ENCODE measurements at regions of chr18 and their contacts with region 1.

Region 1: GRCh38 chr18:22194151-22194598 is 24.8 kb downstream of the GATA6 start:
- DNase-seq: peak; percentile 79

Region 2: DNA sequence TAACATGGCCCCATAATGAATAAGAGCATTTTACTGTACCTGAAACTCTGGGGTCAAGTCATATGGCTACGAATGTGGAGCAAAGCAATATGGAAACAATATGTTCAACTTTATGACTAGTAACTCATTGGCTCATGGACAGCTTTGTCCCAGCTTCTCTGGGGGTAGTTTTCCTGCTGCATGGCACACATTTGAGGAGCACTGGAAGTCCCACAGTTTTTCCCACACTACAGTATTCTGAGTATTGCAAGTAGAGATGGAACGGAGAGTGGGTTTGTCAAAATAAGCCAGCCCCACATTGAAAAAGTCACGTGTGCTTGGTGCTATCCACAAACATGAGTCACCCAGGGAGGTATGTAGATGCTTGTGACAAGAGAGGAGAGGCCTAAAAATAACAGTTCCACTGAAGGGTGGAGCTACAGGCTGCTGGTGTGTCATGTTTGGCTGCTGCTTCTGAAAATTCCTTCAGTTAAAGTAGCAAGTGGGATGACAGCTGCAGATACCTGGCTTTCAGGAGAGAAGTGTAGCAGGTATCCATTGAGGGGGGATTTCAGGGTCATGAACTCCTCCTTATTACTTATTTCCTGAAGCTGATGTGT is 271.8 kb after region 1 on chr18:
- intact Hi-C with region 1: loop called (anchors 5 kb)
- DNase-seq: no peak

Measured in cardiac septum (tissue), 1 donor.